ENCODE measurements at regions of chr18 and their contacts with region 1.

Region 1: DNA sequence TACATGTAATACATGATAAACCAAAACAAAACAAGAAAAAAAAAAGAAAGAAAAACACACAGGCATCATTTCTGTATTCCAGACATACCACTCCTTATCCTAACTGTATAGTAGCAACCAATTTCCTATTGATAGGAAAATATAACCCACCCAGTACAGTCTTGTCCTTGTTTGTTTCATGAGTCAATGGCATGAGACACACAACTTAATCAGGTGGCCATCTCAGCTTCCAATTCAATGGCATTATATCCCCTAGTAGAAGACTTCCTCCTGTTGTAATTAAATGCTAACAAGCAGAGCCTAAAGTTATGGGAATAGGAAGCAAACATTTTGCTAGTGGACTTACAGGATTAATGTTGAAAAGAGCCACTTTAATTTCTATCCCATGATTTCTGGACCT is 121.0 kb upstream of the NOL4 start:
- DNase-seq: peak; percentile 52
- ATAC-seq: peak; percentile 68
- H3K4me3 ChIP-seq: no peak overlapping the region
- H3K27ac ChIP-seq: peak overlapping the region; percentile 60
- H3K4me1 ChIP-seq: peaks cover 45% of the 10 kb centered on the region
- H3K27me3 ChIP-seq: no peaks in the 10 kb centered on the region
- CTCF ChIP-seq: no peak

Region 2: GRCh38 chr18:34330308-34330707 is 15.4 kb before region 1 on chr18:
- CTCF ChIA-PET with region 1: no interaction called
- POLR2A ChIA-PET with region 1: no interaction called
- intact Hi-C with region 1: loop called (anchors 2 kb)
- DNase-seq: peak; percentile 10
- ATAC-seq: peak; percentile 76
- H3K4me3 ChIP-seq: peak overlapping the region; percentile 65
- H3K27ac ChIP-seq: no peak overlapping the region
- H3K4me1 ChIP-seq: peaks cover 7% of the 10 kb centered on the region; the same call in 1 of the 2 replicates
- H3K27me3 ChIP-seq: no peaks in the 10 kb centered on the region
- CTCF ChIP-seq: no peak

Measured in PC-3 (cell line).